GM12878 (cell line): ENCODE measurements at regions of chr11 and their contacts with region 1.

Region 1: DNA sequence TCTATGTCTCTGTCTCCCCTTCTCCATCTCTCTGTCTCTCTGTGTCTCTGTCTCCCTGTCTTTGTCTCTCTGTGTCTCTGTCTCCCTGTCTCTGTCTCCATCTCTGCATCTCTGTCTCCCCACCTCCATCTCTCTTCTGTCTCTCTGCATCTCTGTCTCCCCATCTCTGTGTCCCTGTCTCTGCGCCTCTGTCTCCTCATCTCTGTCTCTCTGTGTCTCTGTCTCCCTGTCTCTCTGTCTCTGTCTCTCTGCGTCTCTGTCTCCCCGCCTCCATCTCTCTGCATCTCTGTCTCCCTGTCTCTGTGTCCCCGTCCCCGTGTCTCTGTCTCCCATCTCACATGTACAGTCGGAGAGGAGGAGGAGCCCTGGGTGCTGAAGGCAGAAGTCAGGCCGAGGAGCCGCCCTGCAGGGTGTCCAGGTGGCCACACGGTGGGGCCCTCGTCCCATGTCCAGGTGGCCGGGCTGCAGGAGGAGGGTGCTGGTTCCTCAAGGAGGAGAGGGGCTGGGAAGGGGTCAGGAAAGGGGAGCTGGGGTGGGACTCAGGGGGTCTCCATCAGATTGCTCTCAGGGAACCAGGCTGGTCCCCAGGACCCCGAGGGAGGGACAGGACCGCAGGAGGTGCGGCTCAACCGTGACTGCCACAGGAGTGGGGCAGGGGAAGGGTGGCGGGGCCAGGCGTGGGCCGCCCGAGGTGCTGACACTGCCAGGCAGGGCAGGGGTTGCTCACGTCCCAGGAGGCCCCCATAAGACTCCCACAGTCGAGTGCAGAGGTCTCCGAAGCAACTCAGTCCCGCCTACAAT is 25.6 kb upstream of the TH start:
- DNase-seq: no peak
- ATAC-seq: peak; percentile 95
- H3K4me3 ChIP-seq: no peak overlapping the region
- H3K27ac ChIP-seq: no peak overlapping the region
- H3K4me1 ChIP-seq: no peaks in the 10 kb centered on the region
- H3K27me3 ChIP-seq: no peaks in the 10 kb centered on the region; a peak in 1 of 4 replicates
- CTCF ChIP-seq: peak; percentile 78 to 86 (median 85)
- EP300 ChIP-seq: no peak
- POLR2A ChIP-seq: no peak
- RAD21 ChIP-seq: peak; percentile 87

Region 2: GRCh38 chr11:2298795-2299761 is 101.9 kb after region 1 on chr11:
- CTCF ChIA-PET with region 1: interaction called, 5 read pairs
- POLR2A ChIA-PET with region 1: no interaction called
- RAD21 ChIA-PET with region 1: no interaction called
- SMC1A ChIA-PET with region 1: no interaction called
- in situ Hi-C with region 1: no loop called
- intact Hi-C with region 1: loop called (anchors 5 kb)
- DNase-seq: no peak
- ATAC-seq: 0 out of 3 replicates have a peak, but pooled peaks have one; percentile 28
- H3K4me3 ChIP-seq: no peak overlapping the region
- H3K27ac ChIP-seq: no peak overlapping the region
- H3K4me1 ChIP-seq: no peaks in the 10 kb centered on the region
- H3K27me3 ChIP-seq: no peaks in the 10 kb centered on the region; a peak in 2 of 4 replicates
- CTCF ChIP-seq: peak; percentile 17 to 26 (median 25); a peak in 3 of 6 replicates
- EP300 ChIP-seq: no peak
- POLR2A ChIP-seq: no peak
- RAD21 ChIP-seq: 0 out of 2 replicates have a peak, but pooled peaks have one; percentile 27